ENCODE measurements at regions of chr9 and their contacts with region 1.

Region 1: DNA sequence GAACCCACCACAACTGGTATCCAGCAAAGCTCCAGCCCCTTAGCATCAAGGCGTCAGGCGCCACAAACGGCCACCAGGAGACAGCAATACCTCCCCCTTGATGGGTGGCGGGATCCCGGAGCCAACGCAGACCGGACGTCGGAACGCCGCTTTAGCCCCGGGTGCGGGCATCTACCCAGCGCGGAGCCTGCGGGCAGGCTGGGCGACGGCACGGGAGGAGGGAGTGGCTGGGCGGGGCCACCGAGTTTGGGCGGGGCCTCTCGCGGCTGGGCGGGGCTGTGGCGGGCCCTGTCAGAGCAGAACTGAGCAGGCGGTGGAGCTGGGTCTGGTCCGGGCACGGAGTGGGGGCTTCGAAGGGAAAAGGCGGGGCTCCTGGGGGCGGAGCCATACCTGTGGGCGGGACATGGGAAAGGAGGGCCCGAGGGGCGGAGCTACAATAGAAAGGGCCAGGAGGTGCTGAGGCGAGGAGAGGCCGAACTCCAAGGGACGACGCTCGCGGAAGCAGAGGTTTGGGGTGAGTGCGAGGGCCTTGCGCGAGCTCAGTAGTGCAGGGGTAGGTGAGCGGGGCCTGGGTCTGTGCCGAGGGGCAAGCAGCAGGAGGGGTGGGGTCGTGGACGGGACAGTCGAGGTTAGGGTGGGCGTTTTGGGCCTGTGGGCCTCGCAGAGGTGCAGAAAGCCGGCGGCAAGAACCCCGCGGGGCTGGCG is 40.2 kb upstream of the GARNL3 start:
- DNase-seq: peak; percentile 96
- H3K4me3 ChIP-seq: peak overlapping the region; percentile 75
- H3K27ac ChIP-seq: peak overlapping the region; percentile 57
- H3K4me1 ChIP-seq: peaks cover 46% of the 10 kb centered on the region
- CTCF ChIP-seq: no peak

Region 2: DNA sequence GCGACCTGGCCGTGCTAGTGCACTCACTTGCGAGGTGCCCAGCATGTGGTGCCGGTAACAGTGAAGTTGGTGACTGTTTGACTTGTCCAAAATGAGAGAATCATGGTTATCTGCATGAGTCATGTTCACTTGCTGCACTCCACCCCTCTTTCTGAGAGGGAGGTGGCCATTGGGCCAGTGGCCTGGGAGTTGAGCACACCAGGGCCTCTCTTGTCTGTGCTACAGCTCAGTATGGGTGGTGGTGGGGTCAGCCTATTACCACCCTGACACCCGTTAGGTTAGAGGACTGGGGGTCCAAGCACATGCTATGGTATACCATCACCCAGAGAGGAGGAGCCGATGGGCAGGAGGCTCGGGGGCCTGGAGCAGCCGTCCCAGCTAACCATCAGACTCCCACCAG is 15.1 kb before region 1 on chr9:
- CTCF ChIA-PET with region 1: interaction called, 5 read pairs
- POLR2A ChIA-PET with region 1: interaction called, 10 read pairs
- intact Hi-C with region 1: no loop called
- DNase-seq: no peak
- H3K4me3 ChIP-seq: no peak overlapping the region
- H3K27ac ChIP-seq: no peak overlapping the region
- H3K4me1 ChIP-seq: no peaks in the 10 kb centered on the region
- CTCF ChIP-seq: no peak

Region 3: GRCh38 chr9:127450830-127451724 is 226.7 kb after region 1 on chr9 and contains the starts of genes LRSAM1 and RPL12:
- CTCF ChIA-PET with region 1: interaction called, 4 read pairs
- POLR2A ChIA-PET with region 1: interaction called, 3 read pairs
- intact Hi-C with region 1: loop called (anchors 2 kb)
- DNase-seq: peak; percentile 96
- H3K4me3 ChIP-seq: peak within 1 kb of the TSS; percentile 99
- H3K27ac ChIP-seq: peak within 1 kb of the TSS; percentile 92
- H3K4me1 ChIP-seq: peaks cover 39% of the 10 kb centered on the region
- CTCF ChIP-seq: 0 out of 2 replicates have a peak, but pooled peaks have one; percentile 22
- total RNA-seq, gene LRSAM1: 13.6 and 20.8 TPM in 2 replicates
- total RNA-seq, gene RPL12: 1,855 and 1,868 TPM in 2 replicates